ENCODE measurements at regions of chr14 and their contacts with region 1.

Region 1: DNA sequence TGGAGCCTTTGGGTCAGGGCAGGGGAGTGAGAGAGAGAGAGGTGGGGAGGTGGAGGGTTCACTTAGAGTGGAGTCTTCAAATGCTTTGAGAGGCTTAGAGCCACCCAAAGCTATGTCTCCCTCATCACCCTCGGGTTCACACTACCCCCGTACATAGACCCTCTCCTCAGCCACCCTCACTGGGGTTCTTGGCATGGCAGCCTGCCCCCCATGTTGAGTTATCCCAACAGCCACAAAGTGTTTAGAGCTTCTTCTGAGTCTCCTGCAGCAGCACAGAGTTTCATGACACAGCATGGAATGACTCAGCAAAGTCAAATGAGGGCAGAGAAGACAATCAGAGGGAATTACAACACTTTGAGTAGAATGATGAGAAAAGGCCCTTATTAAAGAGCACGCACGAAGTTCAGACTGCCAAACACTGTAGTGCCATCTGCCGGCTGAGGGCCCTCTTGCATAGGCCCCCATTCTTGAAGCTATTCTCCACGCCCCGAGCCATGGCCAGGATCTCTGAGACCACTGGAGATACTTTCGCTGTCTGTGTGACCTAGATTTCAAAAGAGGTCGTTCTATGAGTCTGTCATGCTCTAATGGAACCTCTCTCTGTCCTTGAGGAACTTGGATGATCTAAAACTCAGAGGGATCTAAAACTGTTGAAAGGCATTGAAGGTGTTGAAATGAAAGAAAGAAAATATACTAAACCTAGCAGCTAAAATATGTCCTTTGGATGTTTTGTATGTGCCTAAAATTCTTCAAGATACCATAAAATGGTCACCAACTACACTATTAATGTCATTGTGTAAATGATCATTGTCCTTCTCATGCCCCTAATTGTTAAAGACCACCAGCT is 221.9 kb downstream of the PELI2 start:
- DNase-seq: peak; percentile 82
- H3K4me3 ChIP-seq: no peak overlapping the region
- H3K27ac ChIP-seq: no peak overlapping the region
- H3K4me1 ChIP-seq: peaks cover 0 to 29% (median 26%) of the 10 kb centered on the region in 4 donors
- H3K27me3 ChIP-seq: no peaks in the 10 kb centered on the region
- CTCF ChIP-seq: peak; percentile 60 to 76 (median 70)
- EP300 ChIP-seq: no peak
- POLR2A ChIP-seq: no peak

Region 2: GRCh38 chr14:55731881-55732498 is 608.1 kb before region 1 on chr14:
- intact Hi-C with region 1: loop called (anchors 5 kb)
- DNase-seq: no peak
- H3K4me3 ChIP-seq: no peak overlapping the region
- H3K27ac ChIP-seq: no peak overlapping the region
- H3K4me1 ChIP-seq: no peaks in the 10 kb centered on the region
- H3K27me3 ChIP-seq: no peaks in the 10 kb centered on the region
- CTCF ChIP-seq: peak in 3 of 4 experiments; percentile 22 to 50 (median 48)
- EP300 ChIP-seq: no peak
- POLR2A ChIP-seq: no peak

Region 3: GRCh38 chr14:56262530-56262929 is 77.5 kb before region 1 on chr14:
- intact Hi-C with region 1: no loop called
- DNase-seq: no peak
- H3K4me3 ChIP-seq: no peak overlapping the region
- H3K27ac ChIP-seq: no peak overlapping the region
- H3K4me1 ChIP-seq: no peaks in the 10 kb centered on the region
- H3K27me3 ChIP-seq: no peaks in the 10 kb centered on the region
- CTCF ChIP-seq: no peak
- EP300 ChIP-seq: no peak
- POLR2A ChIP-seq: no peak

Region 4: GRCh38 chr14:56543436-56543835 is 203.4 kb after region 1 on chr14:
- intact Hi-C with region 1: no loop called
- DNase-seq: no peak
- H3K4me3 ChIP-seq: no peak overlapping the region
- H3K27ac ChIP-seq: no peak overlapping the region
- H3K4me1 ChIP-seq: no peaks in the 10 kb centered on the region
- H3K27me3 ChIP-seq: no peaks in the 10 kb centered on the region
- CTCF ChIP-seq: no peak
- EP300 ChIP-seq: no peak
- POLR2A ChIP-seq: no peak

Measured in sigmoid colon (tissue), 7 donors.